ENCODE measurements at regions of chr4 and their contacts with region 1.

Region 1: GRCh38 chr4:102420569-102421221 is 75.4 kb upstream of the SLC39A8 start:
- DNase-seq: no peak
- H3K4me3 ChIP-seq: no peak overlapping the region
- H3K27ac ChIP-seq: no peak overlapping the region
- H3K4me1 ChIP-seq: no peaks in the 10 kb centered on the region
- H3K27me3 ChIP-seq: no peaks in the 10 kb centered on the region
- CTCF ChIP-seq: no peak

Region 2: GRCh38 chr4:103099691-103100392 is 679.1 kb after region 1 on chr4 and contains the start of gene BDH2:
- intact Hi-C with region 1: loop called (anchors 10 kb)
- DNase-seq: no peak
- H3K4me3 ChIP-seq: peak within 1 kb of the TSS; percentile 70
- H3K27ac ChIP-seq: peak within 1 kb of the TSS; percentile 78
- H3K4me1 ChIP-seq: peaks cover 43% of the 10 kb centered on the region
- H3K27me3 ChIP-seq: no peaks in the 10 kb centered on the region
- CTCF ChIP-seq: peak; percentile 86
- total RNA-seq, gene BDH2: 27.2 TPM

Measured in left ventricle myocardium inferior (tissue), 1 donor.